Activated T-helper 1 cell treated with anti-CD3 and anti-CD28 coated beads, Interleukin-12 subunit alpha, Interleukin-12 subunit beta, Interleukin-2, Interleukin-4 antibody, amounts not matched to agents 30 ng/mL and 10 ng/mL and 1 ng/mL, durations not matched to agents 14 hours and 24 hours and 36 hours (primary cell): ENCODE measurements at regions of chr3 and their contacts with region 1.

Region 1: GRCh38 chr3:170869645-170870593 is at the start of gene RPL22L1:
- DNase-seq: peak; percentile 90
- H3K4me3 Mint-ChIP-seq: peak within 1 kb of the TSS; percentile 98
- H3K27ac Mint-ChIP-seq: peak within 1 kb of the TSS; percentile 100
- H3K4me1 Mint-ChIP-seq: peaks cover 24% of the 10 kb centered on the region
- H3K27me3 Mint-ChIP-seq: peaks cover 4% of the 10 kb centered on the region
- total RNA-seq, gene RPL22L1: 123 and 145 TPM in 2 replicates

Region 2: GRCh38 chr3:169772897-169773828 is 1096.8 kb before region 1 on chr3 and contains the start of gene MYNN:
- intact Hi-C with region 1: loop called (anchors 2 kb)
- DNase-seq: peak; percentile 91
- H3K4me3 Mint-ChIP-seq: peak within 1 kb of the TSS; percentile 97
- H3K27ac Mint-ChIP-seq: peak within 1 kb of the TSS; percentile 99
- H3K4me1 Mint-ChIP-seq: peaks cover 56% of the 10 kb centered on the region
- H3K27me3 Mint-ChIP-seq: peaks cover 5% of the 10 kb centered on the region
- total RNA-seq, gene MYNN: 14.5 and 16.8 TPM in 2 replicates

Region 3: DNA sequence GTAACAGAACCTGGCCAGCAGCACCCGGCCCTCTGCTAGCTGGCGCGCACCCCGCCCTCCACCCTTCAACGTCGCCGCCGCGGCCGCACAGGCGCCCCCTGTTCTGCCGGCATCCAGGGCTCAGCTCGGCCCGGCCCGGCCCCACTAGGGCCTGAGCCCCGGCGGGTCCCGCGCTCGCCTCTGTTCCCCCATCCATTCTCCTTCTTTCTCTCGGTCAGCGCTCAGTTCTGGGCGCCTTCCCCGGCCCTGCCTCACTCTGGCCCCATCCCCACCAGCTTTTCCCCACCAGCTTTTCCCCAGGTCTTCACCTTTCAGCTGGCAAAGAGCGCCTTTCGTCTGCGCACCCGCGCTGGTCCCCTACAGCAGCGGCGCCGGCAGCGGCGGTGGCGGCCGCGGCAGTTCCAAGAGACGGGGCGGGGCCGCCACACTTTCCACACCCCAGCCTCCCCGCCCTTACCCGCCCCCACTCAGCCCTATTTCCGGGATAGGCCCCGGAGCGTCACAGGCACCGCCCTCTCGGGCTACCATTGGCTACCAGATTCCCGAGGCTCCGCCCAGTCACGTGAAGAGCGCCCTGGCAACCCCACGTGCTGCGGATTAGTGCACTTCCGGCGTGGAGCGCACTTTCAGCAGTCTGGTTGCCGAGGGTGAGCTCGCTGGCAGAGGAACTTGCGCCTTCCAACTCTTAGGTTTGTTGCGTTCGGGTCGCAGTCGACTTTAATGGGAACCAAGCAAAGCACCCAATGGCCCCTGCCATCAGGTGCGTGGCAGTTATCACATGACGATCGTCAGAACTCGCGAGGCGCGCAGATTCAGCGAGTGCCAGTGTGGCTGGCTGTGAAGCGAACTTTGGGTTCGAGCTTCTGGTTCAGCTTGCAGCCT is 38.6 kb after region 1 on chr3 and contains the start of gene EIF5A2:
- intact Hi-C with region 1: loop called (anchors 1 kb)
- DNase-seq: peak; percentile 88
- H3K4me3 Mint-ChIP-seq: peak within 1 kb of the TSS; percentile 96
- H3K27ac Mint-ChIP-seq: peak within 1 kb of the TSS; percentile 85
- H3K4me1 Mint-ChIP-seq: peaks cover 24% of the 10 kb centered on the region
- H3K27me3 Mint-ChIP-seq: peaks cover 12% of the 10 kb centered on the region
- total RNA-seq, gene EIF5A2: 8.1 and 10.5 TPM in 2 replicates

Region 4: GRCh38 chr3:171028025-171028778 is 158.3 kb after region 1 on chr3:
- intact Hi-C with region 1: loop called (anchors 5 kb)
- DNase-seq: peak; percentile 32
- H3K4me3 Mint-ChIP-seq: no peak overlapping the region
- H3K27ac Mint-ChIP-seq: no peak overlapping the region
- H3K4me1 Mint-ChIP-seq: no peaks in the 10 kb centered on the region
- H3K27me3 Mint-ChIP-seq: peaks cover 11% of the 10 kb centered on the region

Region 5: DNA sequence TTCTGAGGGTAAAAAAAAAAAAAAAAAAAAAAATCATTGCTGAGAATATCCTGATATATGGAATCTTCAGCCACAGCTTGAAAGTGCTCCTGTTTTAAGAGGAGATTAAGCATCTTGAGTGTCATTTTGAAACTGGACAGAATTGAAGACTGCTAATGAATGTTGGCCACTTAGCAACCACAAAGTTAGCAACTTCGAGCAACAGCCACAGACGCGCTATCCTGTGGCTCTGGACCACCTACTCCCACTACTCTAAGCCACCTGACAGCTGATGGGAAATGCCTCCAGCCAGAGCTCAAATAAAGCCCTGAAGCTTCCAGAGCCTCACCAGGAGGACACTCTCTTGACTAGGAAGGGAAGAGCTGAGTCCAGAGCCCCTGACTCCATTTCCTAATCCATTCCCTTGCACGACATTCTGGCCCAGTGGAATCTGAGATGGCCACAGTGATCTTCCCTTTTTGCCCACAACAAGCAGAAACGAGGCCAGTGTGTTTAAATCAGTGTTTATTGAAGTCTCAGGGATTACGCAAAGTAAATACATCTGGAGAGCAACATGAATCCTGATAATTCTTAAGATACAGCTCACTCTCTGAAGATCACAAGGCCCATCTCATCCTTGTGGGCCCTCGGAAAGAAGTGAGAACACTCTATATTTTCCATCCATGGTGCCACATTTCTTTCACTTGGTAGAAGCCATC is 1031.8 kb after region 1 on chr3:
- intact Hi-C with region 1: no loop called
- DNase-seq: no peak
- H3K4me3 Mint-ChIP-seq: no peak overlapping the region
- H3K27ac Mint-ChIP-seq: no peak overlapping the region
- H3K4me1 Mint-ChIP-seq: no peaks in the 10 kb centered on the region
- H3K27me3 Mint-ChIP-seq: peaks cover 2% of the 10 kb centered on the region